ENCODE measurements at regions of chr14 and their contacts with region 1.

Region 1: DNA sequence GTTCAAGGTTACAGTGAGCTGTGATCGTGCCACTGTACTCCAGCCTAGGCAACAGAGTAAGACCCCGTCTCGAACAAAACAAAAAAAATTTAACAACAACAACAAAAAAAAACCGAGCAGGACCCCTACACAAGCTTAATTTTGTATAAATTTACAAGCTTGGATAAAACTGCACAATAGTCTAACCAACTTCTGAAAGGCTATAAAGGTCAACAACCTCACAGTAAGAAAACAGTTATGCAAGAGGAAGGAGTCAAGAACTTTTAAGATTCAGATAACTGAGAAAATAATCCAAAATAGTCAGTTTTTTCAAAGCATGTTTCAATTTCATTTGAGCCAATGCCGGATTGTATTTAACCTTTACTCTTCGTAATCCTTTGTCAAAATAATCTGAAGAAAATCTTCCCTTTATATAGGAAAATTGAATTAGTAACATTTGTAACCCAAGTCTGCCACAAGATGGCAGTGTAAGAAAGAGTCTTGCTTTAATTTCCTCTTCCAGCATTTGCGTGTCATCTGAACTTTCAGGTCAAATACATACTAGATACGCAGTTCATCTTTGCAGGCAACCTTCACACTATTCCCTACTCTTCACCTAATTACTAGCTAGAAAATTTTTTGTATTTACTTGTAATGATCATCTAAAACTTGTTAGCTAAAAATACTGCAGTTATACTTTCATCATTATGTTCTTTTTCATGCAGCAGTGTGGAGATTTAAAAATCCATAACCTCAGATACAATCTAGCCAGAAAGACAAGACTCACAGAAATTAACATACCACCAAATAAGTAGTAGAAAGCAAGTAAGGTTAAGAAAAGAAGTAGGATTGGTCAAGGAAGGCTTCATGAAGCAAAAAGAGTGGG is 5.8 kb downstream of the CCNB1IP1 start:
- DNase-seq: peak; percentile 38
- H3K4me3 Mint-ChIP-seq: no peak overlapping the region
- H3K27ac Mint-ChIP-seq: peak overlapping the region; percentile 57
- H3K4me1 Mint-ChIP-seq: peaks cover 45% of the 10 kb centered on the region
- H3K27me3 Mint-ChIP-seq: no peaks in the 10 kb centered on the region

Region 2: DNA sequence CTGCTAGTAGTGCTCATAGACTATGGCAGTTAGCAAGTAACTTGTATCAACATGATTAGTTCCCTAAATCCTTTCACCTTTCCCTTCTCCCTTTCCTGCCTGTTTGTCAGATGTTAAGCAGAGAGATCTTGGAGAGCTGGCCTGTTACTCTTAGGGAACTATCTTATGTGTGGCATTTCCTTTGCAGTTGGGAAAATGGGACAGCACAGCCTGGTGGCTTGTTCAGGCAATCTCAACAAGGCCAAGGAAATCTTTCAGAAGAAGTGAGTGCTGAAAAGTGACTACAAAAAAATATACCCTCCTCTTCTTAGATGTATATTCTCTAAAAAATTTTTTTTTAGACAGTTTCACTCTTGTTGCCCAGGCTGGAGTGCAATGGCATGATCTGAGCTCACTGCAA is 23.6 kb after region 1 on chr14:
- CTCF ChIA-PET with region 1: interaction called, 18 read pairs
- intact Hi-C with region 1: no loop called
- DNase-seq: no peak
- H3K4me3 Mint-ChIP-seq: no peak overlapping the region
- H3K27ac Mint-ChIP-seq: no peak overlapping the region
- H3K4me1 Mint-ChIP-seq: peaks cover 3% of the 10 kb centered on the region
- H3K27me3 Mint-ChIP-seq: no peaks in the 10 kb centered on the region

Measured in activated naive CD4-positive, alpha-beta T cell treated with anti-CD3 and anti-CD28 coated beads for 36 hours (primary cell).